ENCODE measurements at regions of chr2 and their contacts with region 1.

Region 1: DNA sequence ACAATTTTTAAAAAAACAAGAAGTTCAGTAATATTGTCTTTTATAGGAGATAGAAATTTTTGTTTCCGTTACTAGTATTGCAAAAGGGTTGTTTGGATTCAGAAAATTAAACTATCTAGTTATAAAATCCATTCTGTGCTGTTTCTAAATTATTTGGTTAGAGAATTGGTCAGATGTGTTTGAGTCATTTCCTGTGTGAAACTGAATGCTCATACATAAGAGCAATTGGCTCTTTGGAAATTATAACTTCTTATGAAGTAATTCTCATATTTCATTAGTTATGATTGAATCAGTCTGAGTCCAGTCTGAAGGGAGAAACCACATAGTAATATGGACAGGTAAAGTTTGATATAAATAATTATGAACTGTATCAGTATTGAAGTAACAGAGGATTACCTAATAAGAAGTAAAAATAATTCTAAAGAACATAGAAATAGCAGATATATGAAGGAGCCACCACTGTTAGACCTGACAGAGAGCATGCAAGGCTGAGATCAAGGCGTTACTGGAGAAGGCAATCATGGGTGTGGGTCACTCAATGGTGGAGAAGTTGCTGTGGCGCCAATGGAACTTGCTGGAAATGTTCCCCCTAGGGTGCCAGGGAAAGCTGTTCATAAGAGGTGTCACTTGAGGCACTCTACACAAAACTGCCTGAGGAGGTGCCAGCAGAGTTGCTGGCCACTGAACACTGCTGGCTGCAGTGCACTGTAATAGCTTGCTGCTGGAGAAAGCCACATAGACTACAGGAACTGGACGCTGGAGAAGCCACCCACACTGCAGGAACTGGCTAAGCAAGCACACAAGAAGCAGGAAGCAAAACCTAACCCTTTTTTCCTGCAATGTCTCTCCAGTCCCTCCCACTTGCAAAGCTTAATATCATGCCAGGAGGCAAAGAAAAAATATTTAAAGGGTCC is 18.0 kb upstream of the FAP start:
- DNase-seq: peak; percentile 63
- ATAC-seq: peak; percentile 84
- H3K4me3 ChIP-seq: 0 out of 2 replicates have a peak overlapping the region, but pooled peaks have one; percentile 6
- H3K27ac ChIP-seq: peak overlapping the region; percentile 68
- H3K4me1 ChIP-seq: peaks cover 27% of the 10 kb centered on the region
- H3K27me3 ChIP-seq: no peaks in the 10 kb centered on the region
- CTCF ChIP-seq: no peak

Region 2: DNA sequence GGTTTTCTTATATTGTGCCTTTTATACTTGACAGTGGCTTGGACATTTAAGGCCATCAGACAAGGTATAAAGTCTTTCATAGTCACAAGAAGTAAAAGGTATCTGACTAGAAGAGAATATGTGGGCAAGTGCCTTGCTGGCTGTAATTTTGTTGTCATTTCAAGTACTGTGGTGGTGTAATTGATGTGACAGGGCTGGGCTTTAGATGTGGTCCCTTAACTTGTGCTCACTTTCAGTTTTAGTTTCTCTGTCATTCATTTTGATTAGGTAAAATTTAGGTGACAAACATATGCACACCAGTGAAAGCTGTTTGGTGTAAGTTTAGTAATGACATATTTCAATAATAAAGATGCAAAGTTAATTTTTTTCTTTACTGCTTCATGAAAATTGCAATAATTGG is 876.4 kb before region 1 on chr2:
- CTCF ChIA-PET with region 1: no interaction called
- POLR2A ChIA-PET with region 1: no interaction called
- intact Hi-C with region 1: no loop called
- DNase-seq: no peak
- ATAC-seq: no peak
- H3K4me3 ChIP-seq: no peak overlapping the region
- H3K27ac ChIP-seq: no peak overlapping the region
- H3K4me1 ChIP-seq: no peaks in the 10 kb centered on the region
- H3K27me3 ChIP-seq: no peaks in the 10 kb centered on the region
- CTCF ChIP-seq: no peak

Region 3: DNA sequence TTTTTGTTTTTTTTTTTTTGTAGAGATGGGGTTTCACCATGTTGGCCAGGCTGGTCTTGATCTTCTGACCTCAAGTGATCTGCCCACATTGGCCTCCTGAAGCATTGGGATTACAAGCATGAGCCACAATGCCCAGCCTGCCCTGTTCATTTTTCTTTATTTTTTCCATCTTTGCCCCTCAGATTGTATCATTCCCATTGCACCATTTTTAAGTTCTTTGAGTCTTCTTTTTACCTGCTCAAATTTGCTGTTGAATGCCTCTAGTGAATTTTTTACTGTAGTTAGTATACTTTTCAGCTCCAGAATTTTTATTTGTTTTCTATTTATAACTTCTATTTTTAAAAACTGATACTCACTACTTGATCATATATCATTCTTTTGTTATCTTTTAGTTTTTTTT is 738.5 kb before region 1 on chr2:
- CTCF ChIA-PET with region 1: no interaction called
- POLR2A ChIA-PET with region 1: no interaction called
- intact Hi-C with region 1: no loop called
- DNase-seq: no peak
- ATAC-seq: no peak
- H3K4me3 ChIP-seq: no peak overlapping the region
- H3K27ac ChIP-seq: no peak overlapping the region
- H3K4me1 ChIP-seq: no peaks in the 10 kb centered on the region
- H3K27me3 ChIP-seq: no peaks in the 10 kb centered on the region
- CTCF ChIP-seq: no peak

Region 4: DNA sequence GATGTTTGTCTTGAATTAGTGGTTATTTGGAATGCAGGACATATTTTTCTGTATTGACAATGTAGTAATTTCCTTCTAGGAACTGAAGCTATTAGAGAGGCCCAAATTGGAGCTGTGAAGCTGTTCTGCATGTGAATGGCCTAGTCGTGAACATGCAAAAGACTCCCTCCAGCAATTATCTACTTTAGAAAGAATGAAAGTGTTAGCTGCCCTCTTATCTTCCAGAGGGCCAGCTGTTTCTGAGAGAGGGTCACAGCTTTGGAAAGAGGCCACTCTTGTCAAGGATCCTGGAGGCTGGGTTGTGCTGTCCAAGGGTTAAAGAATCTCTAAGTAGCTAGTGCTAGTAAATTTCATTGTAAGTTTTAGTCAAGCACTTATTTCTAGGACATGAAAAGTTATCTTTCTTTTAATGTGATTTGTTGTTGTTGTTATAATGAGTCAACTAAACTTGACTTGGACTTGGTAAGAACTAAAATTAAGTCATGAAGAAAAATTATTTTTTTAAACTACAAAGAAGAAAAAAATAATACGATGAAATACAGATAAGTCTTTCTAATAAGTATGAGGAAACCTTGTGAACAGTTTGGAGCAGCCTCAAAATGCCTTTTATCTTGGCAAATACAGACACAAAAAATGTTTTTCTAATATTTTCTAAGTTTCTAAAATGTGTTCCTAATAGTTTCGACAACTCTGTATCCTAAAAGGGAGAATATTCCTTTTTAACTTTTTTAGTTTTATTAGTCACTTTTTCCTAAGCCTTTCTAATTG is 224.1 kb before region 1 on chr2:
- CTCF ChIA-PET with region 1: no interaction called
- POLR2A ChIA-PET with region 1: no interaction called
- intact Hi-C with region 1: no loop called
- DNase-seq: no peak
- ATAC-seq: no peak
- H3K4me3 ChIP-seq: no peak overlapping the region
- H3K27ac ChIP-seq: no peak overlapping the region
- H3K4me1 ChIP-seq: no peaks in the 10 kb centered on the region
- H3K27me3 ChIP-seq: no peaks in the 10 kb centered on the region
- CTCF ChIP-seq: no peak

Region 5: DNA sequence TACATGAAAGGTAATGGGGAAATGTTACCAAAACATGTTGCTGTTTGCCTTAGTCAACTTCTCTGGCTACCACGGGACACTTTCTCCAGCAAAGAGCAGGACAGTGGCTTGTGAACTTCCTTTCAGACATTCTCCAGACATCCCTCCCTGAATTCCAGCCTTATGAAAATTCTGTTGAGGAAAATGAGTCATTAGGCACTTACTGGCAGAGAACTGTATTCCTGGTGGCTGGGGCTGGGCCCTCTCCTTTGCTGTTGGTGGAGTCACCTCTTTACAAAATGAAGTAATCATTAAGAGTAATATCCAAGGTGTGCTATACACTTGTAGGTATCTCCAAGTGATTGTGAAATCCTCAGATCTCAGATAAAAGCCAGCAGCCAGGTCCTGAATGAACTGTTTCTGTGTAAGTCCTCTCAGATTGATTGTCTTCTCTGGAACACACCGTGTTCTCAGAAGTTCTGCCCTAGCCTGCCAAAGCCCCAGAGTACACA is 16.7 kb before region 1 on chr2:
- CTCF ChIA-PET with region 1: no interaction called
- POLR2A ChIA-PET with region 1: no interaction called
- intact Hi-C with region 1: loop called (anchors 2 kb)
- DNase-seq: peak; percentile 91
- ATAC-seq: peak; percentile 92
- H3K4me3 ChIP-seq: no peak overlapping the region
- H3K27ac ChIP-seq: peak overlapping the region; percentile 42
- H3K4me1 ChIP-seq: peaks cover 35% of the 10 kb centered on the region
- H3K27me3 ChIP-seq: no peaks in the 10 kb centered on the region
- CTCF ChIP-seq: no peak

Measured in PC-3 (cell line).